MCF 10A (cell line): ENCODE measurements at regions of chr1 and their contacts with region 1.

Region 1: DNA sequence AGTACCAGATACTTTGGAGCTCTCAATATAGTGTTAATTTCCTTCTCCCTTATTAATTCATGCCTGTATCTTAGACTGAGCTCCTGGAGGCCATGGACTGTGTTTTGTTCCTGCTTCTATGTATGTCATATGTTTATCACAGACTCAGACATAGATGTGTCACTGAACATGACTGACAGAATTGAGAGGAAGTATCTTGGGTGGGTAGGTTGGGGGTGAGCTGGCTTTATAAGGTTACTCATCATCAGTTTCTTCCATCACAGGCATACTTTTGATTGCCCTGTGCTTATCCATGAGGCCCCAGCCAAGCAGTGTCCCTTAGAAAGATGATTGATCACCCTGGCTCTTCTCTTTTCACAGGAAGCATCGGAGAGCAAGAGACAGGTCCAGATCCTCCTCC is 5.6 kb upstream of the SH3D21 start:
- DNase-seq: no peak
- H3K4me3 Mint-ChIP-seq: no peak overlapping the region
- H3K27ac Mint-ChIP-seq: peak overlapping the region; percentile 67
- H3K4me1 Mint-ChIP-seq: peaks cover 13% of the 10 kb centered on the region
- H3K27me3 Mint-ChIP-seq: no peaks in the 10 kb centered on the region
- CTCF ChIP-seq: no peak

Region 2: DNA sequence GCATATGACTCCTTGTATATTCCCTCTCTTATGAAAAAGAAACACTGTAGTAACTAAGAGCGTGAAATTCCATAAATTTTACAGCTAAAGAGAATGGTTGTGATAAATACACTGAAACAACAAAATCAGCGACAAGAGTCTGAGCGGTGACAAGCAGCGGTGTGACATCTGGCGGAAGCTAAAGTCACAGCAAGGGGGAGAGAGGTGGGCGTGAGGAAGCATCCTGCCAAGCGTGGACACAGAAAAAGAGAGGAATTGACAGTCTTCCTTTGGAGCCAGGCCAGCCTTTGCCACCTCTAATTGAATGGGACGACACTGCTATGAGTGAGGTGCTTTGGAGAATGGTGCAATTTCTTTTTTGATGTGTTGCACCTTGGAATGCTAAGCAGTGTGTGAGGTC is 685.1 kb before region 1 on chr1:
- CTCF ChIA-PET with region 1: no interaction called
- POLR2A ChIA-PET with region 1: no interaction called
- intact Hi-C with region 1: no loop called
- DNase-seq: no peak
- H3K4me3 Mint-ChIP-seq: no peak overlapping the region
- H3K27ac Mint-ChIP-seq: no peak overlapping the region
- H3K4me1 Mint-ChIP-seq: peaks cover 7% of the 10 kb centered on the region
- H3K27me3 Mint-ChIP-seq: no peaks in the 10 kb centered on the region
- CTCF ChIP-seq: no peak

Region 3: DNA sequence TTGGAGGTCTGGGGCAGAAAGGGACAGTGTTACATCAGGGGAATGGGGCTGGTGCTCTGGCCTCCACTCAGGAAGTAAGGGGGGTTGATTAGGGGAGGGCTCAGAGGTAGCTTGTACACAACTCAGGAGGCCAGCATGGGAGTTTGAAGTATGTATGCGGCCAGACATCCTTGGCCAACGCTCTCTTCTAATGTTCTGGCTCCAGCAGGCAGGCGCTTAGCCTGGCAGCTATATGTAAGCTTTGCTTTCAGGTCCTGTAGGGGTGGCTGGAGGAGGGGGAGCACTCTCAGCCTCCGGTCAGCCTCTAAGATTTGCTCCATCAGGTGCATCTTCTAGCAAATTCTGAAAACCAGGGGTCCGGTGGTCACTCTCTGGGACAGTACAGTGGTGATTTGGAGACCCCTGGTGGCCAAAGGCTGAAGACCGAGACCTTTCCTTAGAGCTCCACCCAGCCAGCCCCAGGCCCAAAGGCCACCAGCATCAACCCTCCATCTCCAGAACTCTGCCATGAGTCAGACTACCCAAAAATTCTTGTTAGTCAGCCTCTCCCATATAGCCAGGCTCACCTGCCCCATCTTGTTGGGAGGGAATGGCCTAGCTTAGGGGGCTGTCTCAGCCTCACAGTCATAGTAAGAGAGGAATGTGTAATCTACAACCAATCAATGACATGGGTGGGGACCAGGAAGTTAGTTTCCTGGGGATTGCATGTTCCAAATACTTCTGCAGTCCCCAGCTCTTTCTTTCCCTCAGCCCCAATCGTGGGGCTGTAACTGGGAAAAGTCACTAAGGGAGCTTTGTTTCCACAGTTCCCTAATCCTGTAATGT is 165.8 kb before region 1 on chr1:
- CTCF ChIA-PET with region 1: no interaction called
- POLR2A ChIA-PET with region 1: no interaction called
- intact Hi-C with region 1: no loop called
- DNase-seq: peak; percentile 57
- H3K4me3 Mint-ChIP-seq: no peak overlapping the region
- H3K27ac Mint-ChIP-seq: peak overlapping the region; percentile 79
- H3K4me1 Mint-ChIP-seq: peaks cover 21% of the 10 kb centered on the region
- H3K27me3 Mint-ChIP-seq: no peaks in the 10 kb centered on the region
- CTCF ChIP-seq: peak; percentile 42

Region 4: GRCh38 chr1:36279110-36279788 is 21.3 kb before region 1 on chr1:
- CTCF ChIA-PET with region 1: interaction called, 12 read pairs
- POLR2A ChIA-PET with region 1: interaction called, 4 read pairs
- intact Hi-C with region 1: no loop called
- DNase-seq: peak; percentile 45
- H3K4me3 Mint-ChIP-seq: no peak overlapping the region
- H3K27ac Mint-ChIP-seq: peak overlapping the region; percentile 24
- H3K4me1 Mint-ChIP-seq: peaks cover 16% of the 10 kb centered on the region
- H3K27me3 Mint-ChIP-seq: no peaks in the 10 kb centered on the region
- CTCF ChIP-seq: no peak